CD4-positive, alpha-beta T cell (primary cell): ENCODE measurements at regions of chr10 and their contacts with region 1.

Region 1: DNA sequence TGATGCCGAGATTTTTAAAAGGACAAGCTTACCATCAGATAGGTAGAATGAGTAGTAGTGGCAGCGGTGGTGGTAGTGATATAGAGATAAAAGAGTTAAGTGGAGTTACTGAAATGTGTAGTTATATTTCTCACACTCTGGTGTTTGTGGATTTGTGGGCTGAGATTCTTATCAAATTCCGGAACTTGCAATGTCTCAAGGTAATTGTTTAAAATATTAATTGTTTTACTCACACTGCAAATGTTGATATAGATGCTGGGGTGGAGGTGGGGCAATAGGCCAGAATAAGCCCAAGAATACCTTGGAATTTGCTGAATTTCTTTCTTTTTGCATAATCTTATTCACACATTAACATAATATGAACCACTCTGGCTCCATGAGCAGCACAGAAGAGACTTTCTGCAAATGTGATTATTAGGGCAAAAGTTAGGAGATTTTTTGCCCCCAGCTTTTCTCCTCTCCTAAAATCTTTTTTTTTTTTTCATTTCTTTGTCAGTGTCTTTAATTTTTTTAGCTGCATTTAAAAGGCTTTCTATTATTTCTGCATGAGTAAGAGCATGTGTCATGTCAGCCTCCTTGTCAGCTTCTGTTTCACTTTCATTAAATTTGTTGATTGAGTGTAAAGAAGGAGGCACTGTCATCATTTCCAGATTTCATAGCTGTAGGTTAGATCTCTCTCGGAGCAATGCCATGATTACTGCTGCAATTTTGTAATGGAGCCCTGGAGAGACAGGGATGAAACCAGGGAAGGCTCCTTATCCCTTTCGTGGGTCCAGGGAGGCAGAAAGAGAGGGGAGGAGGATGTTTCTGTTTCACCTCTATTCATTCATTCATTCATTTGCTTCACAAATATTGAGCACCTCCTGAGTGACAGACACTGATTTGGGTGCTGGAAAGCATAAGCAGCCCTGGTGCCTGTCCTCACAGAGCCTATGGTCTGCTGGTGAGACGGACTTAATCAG is 13.1 kb upstream of the SGMS1 start:
- DNase-seq: peak in 4 of 14 experiments; percentile 24 to 73 (median 55)
- ATAC-seq: peak; percentile 79
- H3K4me3 ChIP-seq: peak overlapping the region; percentile 27
- H3K4me3 Mint-ChIP-seq: peak overlapping the region; percentile 67
- H3K27ac ChIP-seq: no peak overlapping the region
- H3K27ac Mint-ChIP-seq: peak overlapping the region; percentile 45
- H3K4me1 ChIP-seq: peaks cover 27% of the 10 kb centered on the region
- H3K4me1 Mint-ChIP-seq: peaks cover 49% of the 10 kb centered on the region
- H3K27me3 ChIP-seq: no peaks in the 10 kb centered on the region
- H3K27me3 Mint-ChIP-seq: no peaks in the 10 kb centered on the region
- CTCF ChIP-seq: no peak

Region 2: DNA sequence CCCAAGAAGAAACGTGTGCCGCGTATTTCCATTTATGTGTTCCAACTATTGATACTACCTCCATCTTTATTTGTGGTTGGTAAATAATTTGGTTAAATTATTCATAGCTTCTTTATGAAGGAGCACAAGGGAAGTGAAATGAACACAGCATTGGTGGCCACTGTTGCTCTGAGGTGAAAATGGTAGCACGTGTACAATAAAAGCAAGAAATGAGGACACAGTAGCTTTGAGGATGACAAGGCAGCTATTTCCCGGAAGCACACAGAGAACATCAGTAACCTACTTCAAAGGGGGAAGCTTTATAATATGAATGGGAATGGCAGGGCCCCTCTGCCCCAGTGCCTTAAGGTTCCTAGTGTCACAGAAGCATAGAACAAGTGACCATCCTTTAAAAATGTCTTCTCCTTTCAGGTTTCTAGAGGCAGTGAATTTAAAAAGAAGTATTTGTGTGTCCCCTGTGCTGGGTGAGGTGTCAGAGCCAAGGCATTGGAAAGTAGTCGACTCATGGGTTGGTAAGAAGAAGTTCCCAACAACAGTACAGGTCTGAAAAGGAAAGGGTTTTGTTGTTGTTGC is 92.0 kb before region 1 on chr10:
- CTCF ChIA-PET with region 1: no interaction called
- POLR2A ChIA-PET with region 1: no interaction called
- intact Hi-C with region 1: no loop called
- DNase-seq: peak in 2 of 14 experiments; percentile 11 to 40
- ATAC-seq: peak; percentile 39
- H3K4me3 ChIP-seq: no peak overlapping the region
- H3K4me3 Mint-ChIP-seq: peak overlapping the region; percentile 5
- H3K27ac ChIP-seq: no peak overlapping the region
- H3K27ac Mint-ChIP-seq: no peak overlapping the region
- H3K4me1 ChIP-seq: peaks cover 28% of the 10 kb centered on the region
- H3K4me1 Mint-ChIP-seq: peaks cover 95% of the 10 kb centered on the region
- H3K27me3 ChIP-seq: no peaks in the 10 kb centered on the region
- H3K27me3 Mint-ChIP-seq: no peaks in the 10 kb centered on the region
- CTCF ChIP-seq: no peak

Region 3: DNA sequence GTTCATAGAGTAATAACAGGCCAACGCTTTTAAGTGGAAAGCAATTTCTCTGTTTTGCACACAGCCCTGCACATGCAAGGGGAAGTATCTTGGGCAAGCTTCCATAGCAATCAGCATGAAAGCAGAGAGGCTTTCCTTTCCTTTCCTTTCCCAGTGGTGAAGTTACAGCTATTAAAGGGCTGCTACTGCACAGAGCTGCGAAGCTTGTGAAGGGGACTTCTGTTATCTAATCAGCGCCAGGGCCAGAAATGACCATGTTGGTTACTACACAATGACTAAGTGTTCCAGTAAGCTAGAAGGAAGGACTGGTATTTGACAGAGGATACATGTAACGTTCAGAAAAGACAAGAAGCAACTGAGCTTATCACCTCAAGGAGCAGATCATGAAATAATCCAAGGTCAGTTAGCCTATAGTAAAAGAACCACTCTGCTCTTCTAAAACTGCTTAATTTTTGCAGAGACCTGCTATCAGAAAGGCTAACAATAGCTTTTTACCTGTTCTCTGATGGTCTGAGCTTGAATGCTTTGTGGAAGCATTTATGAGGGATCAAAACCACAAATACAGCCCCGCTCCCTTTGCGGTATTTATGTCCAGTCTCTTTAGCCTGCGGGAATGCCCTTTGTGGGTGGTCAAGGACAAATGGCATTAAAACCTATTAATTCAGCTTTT is 59.1 kb before region 1 on chr10:
- CTCF ChIA-PET with region 1: no interaction called
- POLR2A ChIA-PET with region 1: no interaction called
- intact Hi-C with region 1: no loop called
- DNase-seq: peak in 1 of 14 experiments; percentile 4
- ATAC-seq: no peak
- H3K4me3 ChIP-seq: no peak overlapping the region
- H3K4me3 Mint-ChIP-seq: no peak overlapping the region
- H3K27ac ChIP-seq: no peak overlapping the region
- H3K27ac Mint-ChIP-seq: no peak overlapping the region
- H3K4me1 ChIP-seq: peaks cover 20% of the 10 kb centered on the region
- H3K4me1 Mint-ChIP-seq: peaks cover 89% of the 10 kb centered on the region
- H3K27me3 ChIP-seq: no peaks in the 10 kb centered on the region
- H3K27me3 Mint-ChIP-seq: no peaks in the 10 kb centered on the region
- CTCF ChIP-seq: no peak

Region 4: GRCh38 chr10:50658165-50658564 is 21.3 kb after region 1 on chr10:
- CTCF ChIA-PET with region 1: no interaction called
- POLR2A ChIA-PET with region 1: interaction called, 11 read pairs
- intact Hi-C with region 1: no loop called
- DNase-seq: no peak
- ATAC-seq: no peak
- H3K4me3 ChIP-seq: no peak overlapping the region
- H3K4me3 Mint-ChIP-seq: no peak overlapping the region
- H3K27ac ChIP-seq: no peak overlapping the region
- H3K27ac Mint-ChIP-seq: no peak overlapping the region
- H3K4me1 ChIP-seq: peaks cover 32% of the 10 kb centered on the region
- H3K4me1 Mint-ChIP-seq: peaks cover 23% of the 10 kb centered on the region
- H3K27me3 ChIP-seq: no peaks in the 10 kb centered on the region
- H3K27me3 Mint-ChIP-seq: no peaks in the 10 kb centered on the region
- CTCF ChIP-seq: no peak

Region 5: DNA sequence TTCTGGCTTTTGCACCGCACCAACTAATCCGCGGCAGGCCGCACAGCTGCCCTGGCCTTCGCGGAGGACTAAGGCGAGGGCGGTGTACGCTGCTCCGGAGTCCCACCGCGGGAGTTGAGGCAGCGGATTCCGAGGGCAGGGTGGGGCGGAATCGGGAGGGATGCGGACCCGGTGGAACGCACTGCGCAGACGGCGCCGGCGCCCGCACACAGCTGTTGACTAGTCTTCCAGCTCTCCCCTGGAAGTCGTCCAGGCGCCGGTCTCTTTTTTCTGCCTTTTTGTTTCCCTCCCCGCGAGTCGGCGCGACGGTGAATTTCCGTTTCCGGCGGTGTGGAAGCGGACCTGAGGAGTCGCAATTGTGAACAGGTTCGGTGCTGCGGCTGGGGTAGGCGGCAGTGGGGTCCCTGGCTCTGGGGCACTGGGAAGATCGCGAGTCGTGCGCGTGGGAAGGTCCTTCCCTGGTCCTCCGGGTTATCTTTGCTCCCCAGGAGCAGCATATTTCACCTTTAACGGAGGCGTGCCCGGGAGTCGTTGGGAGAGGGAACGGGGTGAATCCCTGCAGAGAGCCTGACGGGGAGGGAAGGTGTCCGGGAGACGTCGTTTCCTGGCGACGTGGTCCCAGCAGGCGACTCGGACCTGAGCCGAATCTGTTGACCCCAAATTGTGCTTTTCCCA is 102.9 kb after region 1 on chr10 and contains the start of gene ASAH2B:
- CTCF ChIA-PET with region 1: no interaction called
- POLR2A ChIA-PET with region 1: no interaction called
- intact Hi-C with region 1: loop called in 1 of 2 experiments (anchors 10 kb)
- DNase-seq: peak; percentile 61 to 83 (median 72)
- ATAC-seq: peak; percentile 79
- H3K4me3 ChIP-seq: peak within 1 kb of the TSS; percentile 76
- H3K4me3 Mint-ChIP-seq: peak within 1 kb of the TSS; percentile 97
- H3K27ac ChIP-seq: peak within 1 kb of the TSS; percentile 17 to 56
- H3K27ac Mint-ChIP-seq: peak within 1 kb of the TSS; percentile 81
- H3K4me1 ChIP-seq: peaks cover 16% of the 10 kb centered on the region
- H3K4me1 Mint-ChIP-seq: peaks cover 35% of the 10 kb centered on the region
- H3K27me3 ChIP-seq: no peaks in the 10 kb centered on the region
- H3K27me3 Mint-ChIP-seq: no peaks in the 10 kb centered on the region
- CTCF ChIP-seq: no peak
- total RNA-seq, gene ASAH2B: 1.4 to 1.6 TPM